ENCODE measurements at regions of chr12 and their contacts with region 1.

Region 1: GRCh38 chr12:68317047-68317667 is 15.0 kb downstream of the MDM1 start:
- DNase-seq: no peak
- H3K4me3 ChIP-seq: no peak overlapping the region
- H3K27ac ChIP-seq: no peak overlapping the region
- H3K4me1 ChIP-seq: no peaks in the 10 kb centered on the region
- H3K27me3 ChIP-seq: no peaks in the 10 kb centered on the region
- CTCF ChIP-seq: peak; percentile 39 to 72 (median 47)

Region 2: GRCh38 chr12:68040450-68041075 is 276.6 kb before region 1 on chr12:
- intact Hi-C with region 1: loop called (anchors 5 kb)
- DNase-seq: peak in 1 of 2 donors; percentile 72
- H3K4me3 ChIP-seq: no peak overlapping the region
- H3K27ac ChIP-seq: no peak overlapping the region
- H3K4me1 ChIP-seq: no peaks in the 10 kb centered on the region
- H3K27me3 ChIP-seq: no peaks in the 10 kb centered on the region
- CTCF ChIP-seq: peak; percentile 32 to 82 (median 78)

Region 3: DNA sequence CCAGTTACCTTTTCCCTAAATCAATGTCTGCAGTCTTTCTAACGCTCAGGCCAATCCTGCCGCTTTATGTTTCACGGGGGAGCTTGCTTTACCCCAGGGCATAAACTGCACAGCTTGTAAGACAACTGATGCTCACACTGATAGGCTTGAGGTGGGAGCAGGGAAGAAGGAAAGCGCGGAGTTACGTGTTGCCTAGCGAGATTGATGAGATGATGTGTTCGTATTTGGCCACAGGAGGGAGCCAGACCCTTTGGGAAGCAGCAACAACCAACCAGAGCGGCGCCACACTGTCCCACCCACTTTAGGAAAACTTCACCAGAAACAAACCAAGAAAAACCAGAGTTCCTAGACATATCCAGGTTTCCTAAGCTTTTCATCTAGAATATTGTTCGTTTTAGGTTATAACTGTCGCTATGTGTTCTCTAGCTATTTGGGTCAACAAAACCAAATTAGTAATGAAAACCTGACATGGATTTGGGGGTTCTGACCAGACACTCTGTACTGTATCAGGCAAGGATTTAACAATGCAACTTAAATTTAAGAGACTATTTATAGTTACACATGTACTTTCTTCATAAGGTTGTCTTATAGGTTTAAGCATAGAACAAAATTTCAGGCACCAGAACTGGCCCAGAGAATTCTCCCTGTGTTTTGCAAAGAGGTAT is 93.9 kb before region 1 on chr12:
- intact Hi-C with region 1: loop called (anchors 1 kb)
- DNase-seq: peak in 1 of 2 donors; percentile 90
- H3K4me3 ChIP-seq: peak overlapping the region in 1 of 2 donors; percentile 20
- H3K27ac ChIP-seq: no peak overlapping the region
- H3K4me1 ChIP-seq: no peaks in the 10 kb centered on the region
- H3K27me3 ChIP-seq: no peaks in the 10 kb centered on the region
- CTCF ChIP-seq: peak; percentile 74 to 94 (median 78)

Region 4: DNA sequence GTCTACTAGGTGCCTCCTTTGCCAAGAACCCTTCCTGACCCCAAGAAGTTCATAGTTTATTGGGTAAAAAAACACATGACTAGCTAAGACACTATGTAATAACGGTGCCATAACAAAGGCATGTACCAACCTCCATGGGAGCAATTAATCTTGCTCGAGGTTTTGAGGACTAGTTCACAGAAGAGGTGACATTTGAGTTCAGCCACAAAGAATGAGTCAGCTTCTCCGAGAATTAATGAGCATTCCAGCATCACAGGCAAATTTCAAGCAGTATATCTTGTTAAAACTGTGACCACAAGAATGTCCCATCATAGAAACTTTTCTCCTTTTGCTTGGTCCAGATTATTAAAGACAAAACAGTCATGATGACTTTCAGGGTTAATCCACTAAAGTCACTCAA is 180.5 kb after region 1 on chr12:
- intact Hi-C with region 1: no loop called
- DNase-seq: peak in 1 of 2 donors; percentile 66
- H3K4me3 ChIP-seq: no peak overlapping the region
- H3K27ac ChIP-seq: peak overlapping the region; percentile 43 to 65
- H3K4me1 ChIP-seq: peaks cover 0 to 13% of the 10 kb centered on the region in 2 donors
- H3K27me3 ChIP-seq: no peaks in the 10 kb centered on the region
- CTCF ChIP-seq: no peak